Activated CD8-positive, alpha-beta T cell treated with anti-CD3 and anti-CD28 coated beads for 36 hours (primary cell): ENCODE measurements at regions of chr4 and their contacts with region 1.

Region 1: GRCh38 chr4:123418351-123418931 is 21.8 kb downstream of the SPRY1 start:
- DNase-seq: peak; percentile 30
- ATAC-seq: no peak
- H3K4me3 Mint-ChIP-seq: peak overlapping the region; percentile 15
- H3K27ac Mint-ChIP-seq: peak overlapping the region; percentile 100
- H3K4me1 Mint-ChIP-seq: peaks cover 84% of the 10 kb centered on the region
- H3K27me3 Mint-ChIP-seq: no peaks in the 10 kb centered on the region
- CTCF ChIP-seq: no peak

Region 2: GRCh38 chr4:123444290-123444731 is 25.9 kb after region 1 on chr4:
- CTCF ChIA-PET with region 1: interaction called, 7 read pairs
- POLR2A ChIA-PET with region 1: interaction called, 4 read pairs
- intact Hi-C with region 1: loop called (anchors 2 kb)
- DNase-seq: peak; percentile 84
- ATAC-seq: peak; percentile 86
- H3K4me3 Mint-ChIP-seq: peak overlapping the region; percentile 62
- H3K27ac Mint-ChIP-seq: peak overlapping the region; percentile 93
- H3K4me1 Mint-ChIP-seq: peaks cover 36% of the 10 kb centered on the region
- H3K27me3 Mint-ChIP-seq: no peaks in the 10 kb centered on the region
- CTCF ChIP-seq: no peak